Activated CD4-positive, alpha-beta memory T cell treated with anti-CD3 and anti-CD28 coated beads, Interleukin-2, amount 10 ng/mL, durations not matched to agents 7 days and 5 days (primary cell): ENCODE measurements at regions of chr10 and their contacts with region 1.

Region 1: GRCh38 chr10:28381903-28382347 is 79.1 kb upstream of the MPP7 start:
- DNase-seq: peak; percentile 85
- H3K4me3 Mint-ChIP-seq: no peak overlapping the region
- H3K27ac Mint-ChIP-seq: no peak overlapping the region
- H3K4me1 Mint-ChIP-seq: peaks cover 25% of the 10 kb centered on the region
- H3K27me3 Mint-ChIP-seq: peaks cover 6% of the 10 kb centered on the region

Region 2: GRCh38 chr10:28200804-28201203 is 181.1 kb before region 1 on chr10:
- CTCF ChIA-PET with region 1: no interaction called
- POLR2A ChIA-PET with region 1: no interaction called
- DNase-seq: no peak
- H3K4me3 Mint-ChIP-seq: no peak overlapping the region
- H3K27ac Mint-ChIP-seq: no peak overlapping the region
- H3K4me1 Mint-ChIP-seq: no peaks in the 10 kb centered on the region
- H3K27me3 Mint-ChIP-seq: no peaks in the 10 kb centered on the region

Region 3: DNA sequence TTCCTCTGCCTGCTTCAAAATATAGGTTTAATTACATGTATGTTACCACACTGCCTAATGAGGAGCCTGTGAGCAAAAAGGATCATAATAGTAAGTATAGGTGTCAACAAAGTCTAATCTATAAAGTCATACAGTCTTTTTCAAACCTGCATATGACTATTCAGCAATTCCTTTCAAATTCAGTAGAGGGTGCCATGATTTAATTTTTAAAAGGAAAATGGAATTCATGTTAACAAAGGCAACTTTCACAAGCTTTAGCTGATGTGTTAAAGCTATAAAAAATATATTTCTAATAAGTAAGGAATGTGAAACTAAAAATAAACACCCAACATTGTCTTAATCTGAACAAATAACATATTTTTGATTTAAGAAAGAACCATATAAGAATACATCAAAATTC is 131.1 kb before region 1 on chr10:
- CTCF ChIA-PET with region 1: interaction called, 122 read pairs
- POLR2A ChIA-PET with region 1: no interaction called
- DNase-seq: no peak
- H3K4me3 Mint-ChIP-seq: no peak overlapping the region
- H3K27ac Mint-ChIP-seq: no peak overlapping the region
- H3K4me1 Mint-ChIP-seq: peaks cover 2% of the 10 kb centered on the region
- H3K27me3 Mint-ChIP-seq: no peaks in the 10 kb centered on the region

Region 4: DNA sequence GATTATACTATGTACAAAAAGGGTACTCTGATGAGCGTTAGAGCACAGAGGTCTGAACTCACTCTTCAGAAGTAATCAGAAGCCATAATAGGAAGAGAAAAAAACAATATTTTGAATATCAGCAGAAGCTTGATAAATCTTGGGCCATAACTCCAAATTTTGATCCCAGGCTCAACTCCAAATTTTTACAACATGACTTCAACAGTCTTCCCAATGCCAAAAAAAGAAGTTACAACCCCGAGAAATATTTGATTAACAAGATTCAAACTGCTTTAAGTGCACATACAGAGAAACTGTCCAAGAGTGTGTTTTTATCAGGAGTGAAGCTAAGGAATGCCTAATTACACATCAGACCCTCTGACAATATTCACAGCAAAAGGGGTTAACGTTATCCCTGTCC is 86.6 kb before region 1 on chr10:
- CTCF ChIA-PET with region 1: interaction called, 14 read pairs
- POLR2A ChIA-PET with region 1: no interaction called
- DNase-seq: no peak
- H3K4me3 Mint-ChIP-seq: no peak overlapping the region
- H3K27ac Mint-ChIP-seq: no peak overlapping the region
- H3K4me1 Mint-ChIP-seq: peaks cover 7% of the 10 kb centered on the region
- H3K27me3 Mint-ChIP-seq: peaks cover 3% of the 10 kb centered on the region

Region 5: GRCh38 chr10:28334296-28334695 is 47.6 kb before region 1 on chr10:
- CTCF ChIA-PET with region 1: interaction called, 25 read pairs
- POLR2A ChIA-PET with region 1: interaction called, 6 read pairs
- DNase-seq: peak; percentile 56
- H3K4me3 Mint-ChIP-seq: peak overlapping the region; percentile 81
- H3K27ac Mint-ChIP-seq: peak overlapping the region; percentile 94
- H3K4me1 Mint-ChIP-seq: peaks cover 52% of the 10 kb centered on the region
- H3K27me3 Mint-ChIP-seq: peaks cover 10% of the 10 kb centered on the region